ENCODE measurements at regions of chr3 and their contacts with region 1.

Region 1: GRCh38 chr3:146544002-146544928 is at the start of gene PLSCR1:
- DNase-seq: peak; percentile 92 to 97 (median 94)
- ATAC-seq: peak; percentile 93 to 97 (median 96)
- H3K4me3 ChIP-seq: peak within 1 kb of the TSS; percentile 38 to 92 (median 77)
- H3K27ac ChIP-seq: peak within 1 kb of the TSS; percentile 87 to 99 (median 97)
- H3K4me1 ChIP-seq: peaks cover 0 to 47% (median 15%) of the 10 kb centered on the region in 12 donors
- H3K27me3 ChIP-seq: peaks cover 0 to 3% (median 0%) of the 10 kb centered on the region in 9 donors
- CTCF ChIP-seq: peak in 1 of 12 donors; percentile 17
- POLR2A ChIP-seq: peak in 1 of 2 donors; percentile 74
- total RNA-seq, gene PLSCR1: 17.4 to 113 (median 35.7) TPM

Region 2: GRCh38 chr3:146469150-146470017 is 74.9 kb before region 1 on chr3 and contains the start of gene PLSCR2:
- intact Hi-C with region 1: loop called in 1 of 10 experiments (anchors 2 kb)
- DNase-seq: peak; percentile 55 to 70 (median 64)
- ATAC-seq: peak; percentile 70 to 97 (median 93)
- H3K4me3 ChIP-seq: peak within 1 kb of the TSS; percentile 33 to 70 (median 58)
- H3K27ac ChIP-seq: peak within 1 kb of the TSS in 11 of 12 donors; percentile 23 to 72 (median 57)
- H3K4me1 ChIP-seq: peaks cover 0 to 11% (median 2%) of the 10 kb centered on the region in 12 donors
- H3K27me3 ChIP-seq: no peaks in the 10 kb centered on the region
- CTCF ChIP-seq: no peak
- POLR2A ChIP-seq: peak in 1 of 2 donors; percentile 12
- total RNA-seq, gene PLSCR2: not detected

Region 3: GRCh38 chr3:146504498-146505197 is 39.6 kb before region 1 on chr3:
- intact Hi-C with region 1: loop called in 5 of 10 experiments (anchors 2 to 5 kb)
- DNase-seq: no peak
- ATAC-seq: no peak
- H3K4me3 ChIP-seq: no peak overlapping the region
- H3K27ac ChIP-seq: peak overlapping the region in 1 of 12 donors; percentile 30
- H3K4me1 ChIP-seq: peaks cover 0 to 45% (median 12%) of the 10 kb centered on the region in 12 donors
- H3K27me3 ChIP-seq: no peaks in the 10 kb centered on the region
- CTCF ChIP-seq: no peak
- POLR2A ChIP-seq: no peak

Measured in heart left ventricle (tissue), 16 donors.